Right lobe of liver (tissue), 6 donors: ENCODE measurements at regions of chr19 and their contacts with region 1.

Region 1: GRCh38 chr19:3544742-3545668 is 6.0 kb downstream of the TEKTIP1 start:
- DNase-seq: peak; percentile 76 to 83 (median 80)
- ATAC-seq: peak; percentile 78 to 88 (median 82)
- H3K4me3 ChIP-seq: no peak overlapping the region
- H3K27ac ChIP-seq: no peak overlapping the region
- H3K4me1 ChIP-seq: no peaks in the 10 kb centered on the region
- H3K27me3 ChIP-seq: no peaks in the 10 kb centered on the region
- CTCF ChIP-seq: peak; percentile 93 to 98 (median 96)
- POLR2A ChIP-seq: no peak

Region 2: DNA sequence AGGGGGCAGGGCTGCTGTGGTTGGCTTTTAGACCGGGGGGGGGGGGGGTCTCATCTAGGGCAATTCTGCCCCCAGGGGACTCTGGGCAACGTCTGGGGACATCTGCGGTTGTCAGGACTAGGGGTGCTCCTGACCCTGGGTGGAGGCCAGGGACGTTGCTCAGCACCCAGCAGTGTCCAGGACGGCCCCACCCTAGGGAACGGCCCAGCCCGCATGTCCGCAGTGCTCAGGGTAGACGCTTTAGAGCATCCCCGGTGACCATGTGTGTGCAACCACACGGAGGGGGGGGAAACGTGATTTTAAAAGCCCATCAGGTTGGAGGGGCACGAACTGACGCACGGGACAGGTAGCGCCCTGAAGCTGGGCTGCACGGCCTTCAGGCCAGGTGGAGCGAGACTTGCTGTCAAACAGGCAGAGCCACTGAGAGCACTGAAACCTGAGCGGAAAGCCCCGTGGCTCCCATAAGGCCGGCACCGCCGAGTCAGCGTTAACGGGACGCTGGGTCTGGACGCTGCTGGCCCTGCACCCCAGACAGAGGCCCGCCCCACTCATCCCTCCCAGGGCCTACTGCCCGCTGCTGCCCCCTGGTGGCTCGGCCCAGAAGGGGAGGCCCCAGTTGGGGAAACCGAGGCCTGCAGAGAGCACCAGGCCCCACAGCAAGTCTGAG is 73.3 kb after region 1 on chr19:
- intact Hi-C with region 1: loop called (anchors 10 kb)
- DNase-seq: peak; percentile 71 to 78 (median 78)
- ATAC-seq: peak; percentile 76 to 92 (median 80)
- H3K4me3 ChIP-seq: no peak overlapping the region
- H3K27ac ChIP-seq: no peak overlapping the region
- H3K4me1 ChIP-seq: no peaks in the 10 kb centered on the region
- H3K27me3 ChIP-seq: no peaks in the 10 kb centered on the region
- CTCF ChIP-seq: peak; percentile 81 to 91 (median 83)
- POLR2A ChIP-seq: no peak

Region 3: GRCh38 chr19:3626473-3627350 is 81.7 kb after region 1 on chr19 and contains the start of gene CACTIN:
- intact Hi-C with region 1: loop called in 1 of 2 experiments (anchors 10 kb)
- DNase-seq: peak; percentile 99 to 100 (median 99)
- ATAC-seq: peak; percentile 98 to 99 (median 98)
- H3K4me3 ChIP-seq: peak within 1 kb of the TSS; percentile 98 to 100 (median 99)
- H3K27ac ChIP-seq: peak within 1 kb of the TSS; percentile 89 to 98 (median 97)
- H3K4me1 ChIP-seq: peaks cover 0 to 15% (median 7%) of the 10 kb centered on the region in 4 donors
- H3K27me3 ChIP-seq: no peaks in the 10 kb centered on the region
- CTCF ChIP-seq: peak in 1 of 4 donors; percentile 11
- POLR2A ChIP-seq: peak; percentile 79
- total RNA-seq, gene CACTIN: 8.4 to 14.9 (median 10.3) TPM

Region 4: DNA sequence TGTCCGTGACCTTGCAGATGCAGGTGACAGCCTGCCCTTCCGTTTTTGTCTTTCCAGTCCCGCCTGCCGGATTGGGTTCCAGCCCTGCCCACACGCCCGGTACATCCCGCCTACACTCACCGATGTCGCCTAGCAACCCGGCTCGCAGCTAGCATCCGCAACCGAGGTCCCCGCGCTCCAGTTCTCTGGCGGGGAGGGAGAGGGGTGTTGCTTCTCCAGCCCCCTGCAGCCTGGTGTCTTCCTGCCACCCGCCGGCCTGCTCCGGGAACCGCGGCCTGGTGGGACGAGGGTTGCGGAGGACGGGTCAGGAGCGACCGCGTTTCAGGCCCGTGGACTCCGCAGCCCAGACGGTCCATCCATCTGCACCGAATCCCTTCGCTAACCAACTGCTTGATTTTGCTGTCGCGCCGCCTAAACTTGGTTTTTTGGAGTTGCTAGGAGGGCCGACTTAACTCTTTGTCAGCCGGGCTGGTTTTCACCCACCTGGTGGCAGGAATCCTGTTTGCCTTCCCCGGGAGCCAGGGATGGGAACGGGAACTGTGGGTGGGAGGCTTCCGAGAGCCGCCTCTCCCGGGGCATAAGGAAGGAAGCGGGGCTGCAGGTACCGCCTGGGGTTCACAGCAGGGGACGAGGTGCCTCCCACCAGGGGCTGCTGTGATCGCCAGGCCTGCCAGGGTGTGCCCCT is 256.5 kb after region 1 on chr19:
- intact Hi-C with region 1: no loop called
- DNase-seq: peak in 1 of 3 donors; percentile 55
- ATAC-seq: peak; percentile 58 to 73 (median 70)
- H3K4me3 ChIP-seq: no peak overlapping the region
- H3K27ac ChIP-seq: no peak overlapping the region
- H3K4me1 ChIP-seq: no peaks in the 10 kb centered on the region
- H3K27me3 ChIP-seq: peaks cover 0 to 6% of the 10 kb centered on the region in 2 donors
- CTCF ChIP-seq: no peak
- POLR2A ChIP-seq: no peak